Naive thymus-derived CD4-positive, alpha-beta T cell (primary cell): ENCODE measurements at regions of chr12 and their contacts with region 1.

Region 1: DNA sequence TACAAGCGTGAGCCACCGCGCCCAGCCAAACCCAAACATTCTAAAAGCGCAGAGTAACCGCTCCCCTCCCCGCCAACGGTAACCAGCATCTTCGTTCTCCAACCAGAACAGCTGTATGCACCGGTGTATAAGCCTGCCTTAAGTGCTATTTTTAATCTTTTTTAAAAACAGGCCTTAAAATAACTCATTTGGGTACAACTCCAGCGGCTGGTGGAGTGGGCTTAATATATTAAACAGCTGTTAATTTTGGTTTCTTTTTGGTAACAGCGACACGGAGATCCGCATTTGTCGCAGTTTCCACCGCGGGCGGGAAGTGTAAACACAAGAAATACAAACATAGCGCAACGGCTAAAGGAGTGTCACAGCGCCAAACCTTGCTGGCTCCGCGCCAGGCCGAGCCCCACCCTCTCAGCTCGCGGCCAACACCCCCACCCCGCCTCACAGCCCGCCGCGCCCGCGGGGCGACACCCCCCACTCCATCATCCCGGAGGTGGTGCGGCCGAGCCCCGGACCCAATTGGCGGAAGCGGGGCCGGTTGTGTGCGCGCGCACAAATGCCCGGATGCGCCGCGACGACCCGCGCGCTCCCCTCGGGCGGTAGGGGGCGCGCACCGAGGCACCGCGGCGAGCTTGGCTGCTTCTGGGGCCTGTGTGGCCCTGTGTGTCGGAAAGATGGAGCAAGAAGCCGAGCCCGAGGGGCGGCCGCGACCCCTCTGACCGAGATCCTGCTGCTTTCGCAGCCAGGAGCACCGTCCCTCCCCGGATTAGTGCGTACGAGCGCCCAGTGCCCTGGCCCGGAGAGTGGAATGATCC is at the start of gene MDM2:
- DNase-seq: peak; percentile 94 to 98 (median 96)
- ATAC-seq: peak; percentile 97
- H3K4me3 ChIP-seq: peak within 1 kb of the TSS; percentile 79
- H3K4me3 Mint-ChIP-seq: peak within 1 kb of the TSS; percentile 87 to 100 (median 96)
- H3K27ac ChIP-seq: peak within 1 kb of the TSS; percentile 96
- H3K27ac Mint-ChIP-seq: peak within 1 kb of the TSS; percentile 96 to 100 (median 97)
- H3K4me1 ChIP-seq: peaks cover 3 to 13% of the 10 kb centered on the region in 2 donors
- H3K4me1 Mint-ChIP-seq: peaks cover 6 to 47% (median 29%) of the 10 kb centered on the region in 7 donors
- H3K27me3 ChIP-seq: no peaks in the 10 kb centered on the region
- H3K27me3 Mint-ChIP-seq: no peaks in the 10 kb centered on the region
- total RNA-seq, gene MDM2: 77.8 to 271 (median 80.8) TPM

Region 2: DNA sequence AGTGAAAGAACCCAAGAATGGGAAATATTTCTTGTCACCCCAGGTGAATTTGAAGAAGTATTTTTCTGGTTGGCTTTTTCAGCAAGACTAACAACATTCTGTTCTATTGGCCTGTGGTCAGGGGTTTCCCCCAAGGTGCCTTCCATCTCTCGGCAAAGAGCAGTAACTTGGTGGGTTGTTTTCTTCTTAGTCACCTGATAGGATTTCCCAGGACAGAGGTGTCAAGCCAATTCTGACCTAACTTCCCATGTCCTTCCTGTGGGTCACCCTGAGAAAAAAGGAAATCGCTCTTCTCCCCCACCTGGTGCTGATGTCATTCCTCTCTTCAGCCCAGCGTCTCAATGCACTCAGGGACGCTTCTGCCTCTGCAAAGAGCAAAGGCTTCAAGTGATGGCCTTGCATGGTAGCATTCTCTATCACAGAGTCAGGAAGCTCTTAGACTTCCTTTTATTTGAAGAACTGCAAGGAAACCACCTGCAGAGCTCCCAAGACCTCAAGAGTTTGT is 632.2 kb before region 1 on chr12:
- CTCF ChIA-PET with region 1: no interaction called
- POLR2A ChIA-PET with region 1: interaction called, 5 read pairs
- intact Hi-C with region 1: loop called (anchors 5 kb)
- DNase-seq: peak; percentile 35 to 90 (median 86)
- ATAC-seq: peak; percentile 93
- H3K4me3 ChIP-seq: peak overlapping the region; percentile 40
- H3K4me3 Mint-ChIP-seq: peak overlapping the region; percentile 69 to 86 (median 84)
- H3K27ac ChIP-seq: peak overlapping the region; percentile 78
- H3K27ac Mint-ChIP-seq: peak overlapping the region; percentile 87 to 97 (median 93)
- H3K4me1 ChIP-seq: peaks cover 20 to 65% of the 10 kb centered on the region in 2 donors
- H3K4me1 Mint-ChIP-seq: peaks cover 30 to 82% (median 67%) of the 10 kb centered on the region in 7 donors
- H3K27me3 ChIP-seq: no peaks in the 10 kb centered on the region
- H3K27me3 Mint-ChIP-seq: no peaks in the 10 kb centered on the region

Region 3: GRCh38 chr12:68331869-68332727 is 475.7 kb before region 1 on chr12 and contains the start of gene MDM1:
- CTCF ChIA-PET with region 1: interaction called, 3 read pairs
- POLR2A ChIA-PET with region 1: interaction called, 4 read pairs
- intact Hi-C with region 1: loop called (anchors 1 kb)
- DNase-seq: peak; percentile 85 to 96 (median 95)
- ATAC-seq: peak; percentile 98
- H3K4me3 ChIP-seq: peak within 1 kb of the TSS; percentile 68
- H3K4me3 Mint-ChIP-seq: peak within 1 kb of the TSS; percentile 85 to 93 (median 91)
- H3K27ac ChIP-seq: peak within 1 kb of the TSS; percentile 73
- H3K27ac Mint-ChIP-seq: peak within 1 kb of the TSS; percentile 78 to 93 (median 90)
- H3K4me1 ChIP-seq: peaks cover 9 to 26% of the 10 kb centered on the region in 2 donors
- H3K4me1 Mint-ChIP-seq: peaks cover 33 to 61% (median 52%) of the 10 kb centered on the region in 7 donors
- H3K27me3 ChIP-seq: no peaks in the 10 kb centered on the region
- H3K27me3 Mint-ChIP-seq: peaks cover 0 to 15% (median 0%) of the 10 kb centered on the region in 5 donors
- total RNA-seq, gene MDM1: 16.2 to 38.4 (median 23.4) TPM

Region 4: GRCh38 chr12:68451261-68452077 is 356.3 kb before region 1 on chr12:
- CTCF ChIA-PET with region 1: no interaction called
- POLR2A ChIA-PET with region 1: no interaction called
- intact Hi-C with region 1: loop called in 1 of 2 experiments (anchors 5 kb)
- DNase-seq: peak in 7 of 9 donors; percentile 8 to 59 (median 29)
- ATAC-seq: peak; percentile 68
- H3K4me3 ChIP-seq: peak overlapping the region; percentile 28
- H3K4me3 Mint-ChIP-seq: peak overlapping the region; percentile 61 to 85 (median 72)
- H3K27ac ChIP-seq: peak overlapping the region; percentile 48
- H3K27ac Mint-ChIP-seq: peak overlapping the region; percentile 49 to 97 (median 76)
- H3K4me1 ChIP-seq: peaks cover 64 to 68% of the 10 kb centered on the region in 2 donors
- H3K4me1 Mint-ChIP-seq: peaks cover 72 to 100% (median 95%) of the 10 kb centered on the region in 7 donors
- H3K27me3 ChIP-seq: no peaks in the 10 kb centered on the region
- H3K27me3 Mint-ChIP-seq: no peaks in the 10 kb centered on the region

Region 5: DNA sequence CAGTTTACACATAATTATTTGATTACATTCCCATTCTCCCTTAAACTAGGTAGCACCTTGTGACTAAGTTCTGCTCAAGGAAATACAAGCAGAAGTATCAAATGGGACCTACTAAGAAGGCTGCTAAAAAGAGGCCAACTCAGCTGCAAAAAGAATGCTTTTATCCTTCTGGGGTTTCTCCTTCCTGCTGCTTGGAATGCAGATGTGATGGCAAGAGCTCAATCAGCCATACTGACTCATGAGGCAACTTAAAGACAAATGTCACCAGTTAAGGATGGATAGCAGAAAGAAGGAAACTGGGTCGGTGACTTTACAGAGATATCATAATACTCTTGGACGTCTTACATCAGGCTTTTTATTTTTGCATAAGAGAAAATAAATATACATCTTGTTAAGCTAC is 235.1 kb before region 1 on chr12:
- CTCF ChIA-PET with region 1: no interaction called
- POLR2A ChIA-PET with region 1: no interaction called
- intact Hi-C with region 1: no loop called
- DNase-seq: no peak
- ATAC-seq: no peak
- H3K4me3 ChIP-seq: no peak overlapping the region
- H3K4me3 Mint-ChIP-seq: no peak overlapping the region
- H3K27ac ChIP-seq: no peak overlapping the region
- H3K27ac Mint-ChIP-seq: peak overlapping the region in 1 of 9 donors; percentile 30
- H3K4me1 ChIP-seq: peaks cover 5 to 7% of the 10 kb centered on the region in 2 donors
- H3K4me1 Mint-ChIP-seq: peaks cover 2 to 39% (median 32%) of the 10 kb centered on the region in 7 donors
- H3K27me3 ChIP-seq: no peaks in the 10 kb centered on the region
- H3K27me3 Mint-ChIP-seq: no peaks in the 10 kb centered on the region

Region 6: GRCh38 chr12:68686595-68687521 is 120.9 kb before region 1 on chr12 and contains the start of gene NUP107:
- CTCF ChIA-PET with region 1: interaction called, 3 read pairs
- POLR2A ChIA-PET with region 1: interaction called, 8 read pairs
- intact Hi-C with region 1: loop called (anchors 1 kb)
- DNase-seq: peak; percentile 92 to 97 (median 95)
- ATAC-seq: peak; percentile 99
- H3K4me3 ChIP-seq: peak within 1 kb of the TSS; percentile 90
- H3K4me3 Mint-ChIP-seq: peak within 1 kb of the TSS; percentile 94 to 100 (median 98)
- H3K27ac ChIP-seq: peak within 1 kb of the TSS; percentile 85
- H3K27ac Mint-ChIP-seq: peak within 1 kb of the TSS; percentile 96 to 100 (median 99)
- H3K4me1 ChIP-seq: peaks cover 13 to 16% of the 10 kb centered on the region in 2 donors
- H3K4me1 Mint-ChIP-seq: peaks cover 10 to 51% (median 42%) of the 10 kb centered on the region in 7 donors
- H3K27me3 ChIP-seq: no peaks in the 10 kb centered on the region
- H3K27me3 Mint-ChIP-seq: peaks cover 0 to 2% (median 0%) of the 10 kb centered on the region in 5 donors
- total RNA-seq, gene NUP107: 45.2 to 80.9 (median 69.0) TPM

Region 7: GRCh38 chr12:68831272-68831671 is 23.5 kb after region 1 on chr12:
- CTCF ChIA-PET with region 1: interaction called, 4 read pairs
- POLR2A ChIA-PET with region 1: interaction called, 6 read pairs
- intact Hi-C with region 1: loop called in 1 of 2 experiments (anchors 1 kb)
- DNase-seq: no peak
- ATAC-seq: no peak
- H3K4me3 ChIP-seq: no peak overlapping the region
- H3K4me3 Mint-ChIP-seq: no peak overlapping the region
- H3K27ac ChIP-seq: no peak overlapping the region
- H3K27ac Mint-ChIP-seq: peak overlapping the region in 1 of 9 donors; percentile 62
- H3K4me1 ChIP-seq: no peaks in the 10 kb centered on the region
- H3K4me1 Mint-ChIP-seq: peaks cover 8 to 25% (median 20%) of the 10 kb centered on the region in 7 donors
- H3K27me3 ChIP-seq: no peaks in the 10 kb centered on the region
- H3K27me3 Mint-ChIP-seq: no peaks in the 10 kb centered on the region

Region 8: GRCh38 chr12:69070319-69071090 is 262.7 kb after region 1 on chr12:
- CTCF ChIA-PET with region 1: no interaction called
- POLR2A ChIA-PET with region 1: no interaction called
- intact Hi-C with region 1: no loop called
- DNase-seq: peak; percentile 7 to 58 (median 45)
- ATAC-seq: peak; percentile 81
- H3K4me3 ChIP-seq: no peak overlapping the region
- H3K4me3 Mint-ChIP-seq: no peak overlapping the region
- H3K27ac ChIP-seq: no peak overlapping the region
- H3K27ac Mint-ChIP-seq: no peak overlapping the region
- H3K4me1 ChIP-seq: no peaks in the 10 kb centered on the region
- H3K4me1 Mint-ChIP-seq: peaks cover 0 to 7% (median 0%) of the 10 kb centered on the region in 7 donors
- H3K27me3 ChIP-seq: no peaks in the 10 kb centered on the region
- H3K27me3 Mint-ChIP-seq: peaks cover 10 to 16% (median 14%) of the 10 kb centered on the region in 5 donors

Region 9: GRCh38 chr12:69585189-69586062 is 777.6 kb after region 1 on chr12 and contains the start of gene CCT2:
- CTCF ChIA-PET with region 1: no interaction called
- POLR2A ChIA-PET with region 1: no interaction called
- intact Hi-C with region 1: loop called in 1 of 2 experiments (anchors 1 kb)
- DNase-seq: peak; percentile 88 to 96 (median 95)
- ATAC-seq: peak; percentile 97
- H3K4me3 ChIP-seq: peak within 1 kb of the TSS; percentile 100
- H3K4me3 Mint-ChIP-seq: peak within 1 kb of the TSS; percentile 84 to 97 (median 95)
- H3K27ac ChIP-seq: peak within 1 kb of the TSS; percentile 96
- H3K27ac Mint-ChIP-seq: peak within 1 kb of the TSS; percentile 91 to 98 (median 97)
- H3K4me1 ChIP-seq: peaks cover 7 to 11% of the 10 kb centered on the region in 2 donors
- H3K4me1 Mint-ChIP-seq: peaks cover 9 to 28% (median 17%) of the 10 kb centered on the region in 7 donors
- H3K27me3 ChIP-seq: no peaks in the 10 kb centered on the region
- H3K27me3 Mint-ChIP-seq: no peaks in the 10 kb centered on the region
- total RNA-seq, gene CCT2: 106 to 200 (median 157) TPM